ENCODE measurements at regions of chr18 and their contacts with region 1.

Region 1: GRCh38 chr18:59877361-59877760 is 22.4 kb upstream of the PMAIP1 start:
- DNase-seq: no peak
- ATAC-seq: no peak
- H3K4me3 ChIP-seq: no peak overlapping the region
- H3K27ac ChIP-seq: no peak overlapping the region
- H3K4me1 ChIP-seq: peaks cover 27% of the 10 kb centered on the region
- H3K27me3 ChIP-seq: no peaks in the 10 kb centered on the region
- CTCF ChIP-seq: no peak

Region 2: DNA sequence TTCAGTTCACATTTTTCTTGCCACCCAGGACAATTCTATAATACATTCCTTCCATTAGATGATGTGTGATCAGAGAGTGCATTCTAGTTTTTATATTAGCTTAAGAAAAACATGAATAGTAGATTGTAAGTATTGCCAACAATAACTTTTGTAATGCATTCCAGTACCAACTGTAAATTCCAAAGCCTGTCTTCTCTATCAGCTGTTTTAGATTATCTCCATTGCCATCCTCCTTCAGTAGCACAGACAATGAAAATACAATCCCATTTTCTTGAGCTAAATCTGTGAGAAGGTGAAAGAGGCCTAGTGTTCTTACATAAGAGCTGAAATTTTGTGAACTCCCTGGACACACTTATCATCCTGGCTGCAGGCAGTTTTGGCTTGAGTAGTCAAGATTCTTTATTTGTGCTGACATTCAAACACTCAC is 284.1 kb before region 1 on chr18:
- CTCF ChIA-PET with region 1: no interaction called
- POLR2A ChIA-PET with region 1: interaction called, 22 read pairs
- intact Hi-C with region 1: no loop called
- DNase-seq: no peak
- ATAC-seq: no peak
- H3K4me3 ChIP-seq: no peak overlapping the region
- H3K27ac ChIP-seq: no peak overlapping the region
- H3K4me1 ChIP-seq: no peaks in the 10 kb centered on the region
- H3K27me3 ChIP-seq: no peaks in the 10 kb centered on the region
- CTCF ChIP-seq: no peak

Region 3: GRCh38 chr18:59715966-59716369 is 161.4 kb before region 1 on chr18:
- CTCF ChIA-PET with region 1: no interaction called
- POLR2A ChIA-PET with region 1: no interaction called
- intact Hi-C with region 1: no loop called
- DNase-seq: peak; percentile 95
- ATAC-seq: peak; percentile 78
- H3K4me3 ChIP-seq: no peak overlapping the region
- H3K27ac ChIP-seq: peak overlapping the region; percentile 23
- H3K4me1 ChIP-seq: peaks cover 56% of the 10 kb centered on the region
- H3K27me3 ChIP-seq: no peaks in the 10 kb centered on the region
- CTCF ChIP-seq: no peak